Caco-2 (cell line): ENCODE measurements at regions of chr6 and their contacts with region 1.

Region 1: DNA sequence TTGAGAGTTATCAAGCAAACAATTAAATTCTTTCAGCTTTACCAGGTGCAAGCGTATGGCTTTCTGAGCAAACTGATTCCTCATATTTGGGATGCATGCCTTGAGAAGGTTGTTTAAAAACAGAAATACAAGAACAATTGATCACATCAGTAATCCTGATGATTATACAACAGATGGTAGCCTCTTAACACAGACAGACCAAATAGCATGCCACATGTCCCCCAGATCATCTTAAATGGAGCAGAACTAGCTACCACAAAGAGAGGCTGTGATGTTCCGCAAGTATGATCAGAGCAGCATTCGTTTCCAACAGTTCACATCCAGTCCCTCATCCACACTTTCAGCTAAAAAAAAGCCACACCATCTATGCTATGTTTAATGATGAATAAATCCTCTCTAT is 246.2 kb upstream of the NRSN1 start:
- DNase-seq: no peak
- H3K4me3 ChIP-seq: no peak overlapping the region
- H3K4me3 Mint-ChIP-seq: no peak overlapping the region
- H3K27ac Mint-ChIP-seq: no peak overlapping the region
- H3K4me1 ChIP-seq: no peaks in the 10 kb centered on the region
- H3K4me1 Mint-ChIP-seq: no peaks in the 10 kb centered on the region
- H3K27me3 ChIP-seq: no peaks in the 10 kb centered on the region
- H3K27me3 Mint-ChIP-seq: peaks cover 11% of the 10 kb centered on the region
- CTCF ChIP-seq: no peak

Region 2: GRCh38 chr6:23823421-23823820 is 56.4 kb before region 1 on chr6:
- CTCF ChIA-PET with region 1: no interaction called
- POLR2A ChIA-PET with region 1: no interaction called
- intact Hi-C with region 1: loop called (anchors 2 kb)
- DNase-seq: no peak
- H3K4me3 ChIP-seq: no peak overlapping the region
- H3K4me3 Mint-ChIP-seq: no peak overlapping the region
- H3K27ac Mint-ChIP-seq: no peak overlapping the region
- H3K4me1 ChIP-seq: peaks cover 8% of the 10 kb centered on the region
- H3K4me1 Mint-ChIP-seq: no peaks in the 10 kb centered on the region
- H3K27me3 ChIP-seq: no peaks in the 10 kb centered on the region
- H3K27me3 Mint-ChIP-seq: no peaks in the 10 kb centered on the region
- CTCF ChIP-seq: no peak

Region 3: DNA sequence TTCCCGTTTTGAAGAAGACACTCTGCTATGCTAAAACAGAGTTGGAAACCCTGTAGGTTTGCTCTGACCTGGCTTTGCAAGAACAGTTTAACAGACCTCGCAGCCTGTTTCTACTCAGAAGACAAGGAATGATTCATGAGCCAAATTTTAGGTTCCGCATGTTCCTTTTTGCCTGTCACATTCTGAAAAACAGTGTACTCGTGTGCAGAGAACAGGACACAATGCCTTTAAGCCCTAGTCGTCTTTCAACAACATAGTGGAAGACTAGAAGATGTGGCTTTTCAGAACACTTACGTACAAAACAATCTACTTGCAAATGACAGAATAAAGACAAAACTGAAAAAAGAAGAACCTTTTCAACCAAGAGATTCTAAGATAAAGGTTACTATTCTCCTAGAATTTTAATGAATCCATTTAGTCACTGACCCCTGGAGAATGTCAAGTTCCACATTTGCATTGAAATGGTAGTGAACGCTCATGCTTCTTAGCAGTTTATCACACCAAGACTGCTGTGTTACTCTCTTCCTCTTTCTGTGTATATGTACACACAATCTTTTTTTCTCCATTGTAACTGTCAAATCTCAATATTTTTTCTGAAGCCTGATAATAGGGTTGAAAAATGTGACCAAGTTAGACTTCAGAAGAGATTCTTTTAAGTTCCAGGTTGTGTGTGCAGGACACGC is 25.5 kb after region 1 on chr6:
- CTCF ChIA-PET with region 1: no interaction called
- POLR2A ChIA-PET with region 1: no interaction called
- intact Hi-C with region 1: no loop called
- DNase-seq: no peak
- H3K4me3 ChIP-seq: no peak overlapping the region
- H3K4me3 Mint-ChIP-seq: no peak overlapping the region
- H3K27ac Mint-ChIP-seq: no peak overlapping the region
- H3K4me1 ChIP-seq: no peaks in the 10 kb centered on the region
- H3K4me1 Mint-ChIP-seq: no peaks in the 10 kb centered on the region
- H3K27me3 ChIP-seq: peaks cover 3% of the 10 kb centered on the region; the same call in 1 of the 2 replicates
- H3K27me3 Mint-ChIP-seq: peaks cover 20% of the 10 kb centered on the region
- CTCF ChIP-seq: no peak

Region 4: GRCh38 chr6:24032896-24033688 is 153.3 kb after region 1 on chr6:
- CTCF ChIA-PET with region 1: no interaction called
- POLR2A ChIA-PET with region 1: no interaction called
- intact Hi-C with region 1: no loop called
- DNase-seq: peak; percentile 33 to 52
- H3K4me3 ChIP-seq: no peak overlapping the region
- H3K4me3 Mint-ChIP-seq: no peak overlapping the region
- H3K27ac Mint-ChIP-seq: no peak overlapping the region
- H3K4me1 ChIP-seq: 0 out of 2 replicates have a peak, but pooled peaks cover 4% of the 10 kb centered on the region
- H3K4me1 Mint-ChIP-seq: no peaks in the 10 kb centered on the region
- H3K27me3 ChIP-seq: no peaks in the 10 kb centered on the region
- H3K27me3 Mint-ChIP-seq: peaks cover 14% of the 10 kb centered on the region
- CTCF ChIP-seq: no peak